Left ventricle myocardium superior (tissue), 1 donor: ENCODE measurements at regions of chr19 and their contacts with region 1.

Region 1: GRCh38 chr19:56350416-56351045 is 35.9 kb upstream of the ZSCAN5A start:
- DNase-seq: no peak
- ATAC-seq: no peak

Region 2: GRCh38 chr19:56252699-56253422 is 97.7 kb before region 1 on chr19:
- intact Hi-C with region 1: loop called (anchors 5 kb)
- DNase-seq: peak; percentile 80
- ATAC-seq: peak; percentile 72